Naive thymus-derived CD4-positive, alpha-beta T cell (primary cell): ENCODE measurements at regions of chr7 and their contacts with region 1.

Region 1: GRCh38 chr7:156640257-156640948 is at the start of gene RNF32:
- DNase-seq: peak; percentile 72 to 100 (median 81)
- ATAC-seq: peak; percentile 88
- H3K4me3 ChIP-seq: peak within 1 kb of the TSS; percentile 77
- H3K4me3 Mint-ChIP-seq: peak within 1 kb of the TSS; percentile 78 to 98 (median 87)
- H3K27ac ChIP-seq: peak within 1 kb of the TSS; percentile 67
- H3K27ac Mint-ChIP-seq: peak within 1 kb of the TSS in 8 of 9 donors; percentile 50 to 100 (median 84)
- H3K4me1 ChIP-seq: peaks cover 6% of the 10 kb centered on the region in 2 donors
- H3K4me1 Mint-ChIP-seq: peaks cover 7 to 48% (median 17%) of the 10 kb centered on the region in 7 donors
- H3K27me3 ChIP-seq: no peaks in the 10 kb centered on the region
- H3K27me3 Mint-ChIP-seq: peaks cover 12 to 65% (median 42%) of the 10 kb centered on the region in 5 donors
- total RNA-seq, gene RNF32: 0.81 to 2.1 (median 0.99) TPM in 4 of 5 experiments, not detected in the other

Region 2: DNA sequence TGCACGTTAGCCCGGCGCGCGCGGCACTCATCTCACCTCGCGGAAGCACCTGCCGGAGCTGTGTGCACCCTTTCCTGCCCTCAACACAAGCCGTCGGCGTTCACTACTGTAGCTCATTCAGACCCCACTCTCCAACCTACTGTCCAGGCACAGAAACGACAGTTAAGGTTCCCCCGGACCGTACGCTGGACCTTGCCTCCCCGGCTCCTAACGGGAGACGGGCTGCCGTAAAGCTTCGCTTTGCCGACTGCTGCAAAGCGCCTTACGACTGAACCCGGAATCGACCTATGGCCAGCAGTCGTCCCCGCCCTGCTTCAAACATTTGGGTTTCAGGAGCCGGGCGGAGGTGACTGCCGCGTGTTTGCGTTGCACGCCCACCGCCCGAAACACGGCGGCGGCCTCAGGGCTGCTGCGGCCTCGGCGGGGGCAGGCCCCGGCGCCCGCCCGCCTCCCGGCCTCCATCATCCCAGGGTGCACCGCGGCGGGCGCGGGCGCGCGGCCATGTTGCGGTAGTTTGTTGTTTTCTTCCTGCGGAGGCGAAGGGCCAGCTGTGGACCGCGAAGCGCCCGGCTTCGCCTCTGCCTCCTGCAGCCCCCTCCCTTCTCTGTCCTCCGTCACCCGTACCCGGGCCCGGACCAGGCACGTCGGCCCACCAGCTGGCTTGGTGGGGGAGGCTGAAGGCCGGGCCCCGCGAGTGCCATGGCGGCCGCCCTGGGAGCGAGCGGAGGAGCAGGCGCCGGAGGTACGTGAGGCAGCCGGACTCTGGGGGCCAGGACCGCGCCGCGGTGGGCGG is 996.0 kb before region 1 on chr7 and contains the start of gene RBM33:
- CTCF ChIA-PET with region 1: no interaction called
- POLR2A ChIA-PET with region 1: no interaction called
- intact Hi-C with region 1: loop called (anchors 5 to 10 kb)
- DNase-seq: peak; percentile 74 to 91 (median 84)
- ATAC-seq: peak; percentile 90
- H3K4me3 ChIP-seq: peak within 1 kb of the TSS; percentile 99
- H3K4me3 Mint-ChIP-seq: peak within 1 kb of the TSS; percentile 94 to 100 (median 99)
- H3K27ac ChIP-seq: peak within 1 kb of the TSS; percentile 98
- H3K27ac Mint-ChIP-seq: peak within 1 kb of the TSS; percentile 94 to 100 (median 99)
- H3K4me1 ChIP-seq: peaks cover 22 to 27% of the 10 kb centered on the region in 2 donors
- H3K4me1 Mint-ChIP-seq: peaks cover 30 to 58% (median 49%) of the 10 kb centered on the region in 7 donors
- H3K27me3 ChIP-seq: no peaks in the 10 kb centered on the region
- H3K27me3 Mint-ChIP-seq: peaks cover 0 to 2% (median 0%) of the 10 kb centered on the region in 5 donors
- total RNA-seq, gene RBM33: 90.2 to 177 (median 164) TPM

Region 3: DNA sequence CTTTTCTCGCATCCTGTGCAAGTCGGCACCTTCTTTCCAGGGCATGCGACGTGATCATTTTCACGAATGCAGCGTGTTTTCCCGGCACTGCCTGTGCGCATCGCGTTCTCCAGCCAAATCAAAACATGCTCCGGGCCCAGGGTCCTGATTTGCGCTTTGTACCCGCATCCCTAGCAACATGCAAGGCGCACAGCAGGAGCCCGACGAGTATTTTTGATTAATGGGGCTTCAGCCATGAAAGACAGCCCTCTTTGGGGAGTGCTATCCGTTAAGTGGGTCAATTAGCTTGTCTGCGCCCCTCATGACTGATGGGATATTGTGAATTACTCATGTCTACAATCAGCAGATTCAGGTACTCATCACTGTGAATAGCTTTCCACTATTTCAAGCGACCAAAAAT is 243.2 kb before region 1 on chr7:
- CTCF ChIA-PET with region 1: no interaction called
- POLR2A ChIA-PET with region 1: no interaction called
- intact Hi-C with region 1: no loop called
- DNase-seq: no peak
- ATAC-seq: no peak
- H3K4me3 ChIP-seq: no peak overlapping the region
- H3K4me3 Mint-ChIP-seq: no peak overlapping the region
- H3K27ac ChIP-seq: no peak overlapping the region
- H3K27ac Mint-ChIP-seq: no peak overlapping the region
- H3K4me1 ChIP-seq: no peaks in the 10 kb centered on the region
- H3K4me1 Mint-ChIP-seq: no peaks in the 10 kb centered on the region
- H3K27me3 ChIP-seq: no peaks in the 10 kb centered on the region
- H3K27me3 Mint-ChIP-seq: peaks cover 0 to 19% (median 4%) of the 10 kb centered on the region in 5 donors

Region 4: DNA sequence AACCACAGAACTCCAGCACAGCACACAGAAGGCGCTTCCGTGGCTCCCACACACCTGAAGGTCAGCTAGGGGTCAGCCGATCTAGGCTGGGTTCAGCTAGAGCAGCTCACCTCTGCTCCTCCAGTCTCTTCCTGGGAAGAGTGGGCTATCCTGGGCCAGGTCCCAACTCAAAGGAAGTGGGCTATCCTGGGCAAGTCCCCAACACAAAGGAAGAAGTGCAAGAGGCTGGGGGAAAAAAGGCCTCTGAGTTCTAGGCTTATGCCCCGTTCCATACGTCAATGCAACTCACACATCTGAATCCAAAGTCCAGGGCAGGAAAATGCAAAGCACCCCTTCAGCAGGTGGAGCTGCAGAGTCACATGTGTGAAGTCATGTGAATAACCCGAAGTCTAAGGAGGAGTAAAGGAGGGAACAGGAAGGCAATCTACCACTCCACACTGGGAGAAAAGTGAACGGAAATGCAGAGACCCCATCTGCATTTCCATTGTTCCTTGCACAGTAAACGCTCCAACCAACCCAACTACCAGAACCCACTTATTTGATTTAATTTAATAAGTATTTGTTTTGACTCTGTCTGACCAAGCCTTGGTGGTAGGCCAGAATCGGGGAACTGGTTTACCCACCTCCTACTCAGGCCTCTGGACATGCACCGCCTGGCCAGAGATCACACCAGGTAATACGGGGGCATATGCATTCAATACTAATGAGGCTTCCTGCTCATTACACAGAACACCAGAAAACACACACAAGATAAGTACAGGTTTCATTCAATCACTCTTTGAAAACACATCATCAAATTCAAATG is 95.3 kb before region 1 on chr7:
- CTCF ChIA-PET with region 1: no interaction called
- POLR2A ChIA-PET with region 1: interaction called, 4 read pairs
- intact Hi-C with region 1: loop called in 1 of 2 experiments (anchors 5 kb)
- DNase-seq: no peak
- ATAC-seq: no peak
- H3K4me3 ChIP-seq: no peak overlapping the region
- H3K4me3 Mint-ChIP-seq: no peak overlapping the region
- H3K27ac ChIP-seq: no peak overlapping the region
- H3K27ac Mint-ChIP-seq: no peak overlapping the region
- H3K4me1 ChIP-seq: no peaks in the 10 kb centered on the region
- H3K4me1 Mint-ChIP-seq: no peaks in the 10 kb centered on the region
- H3K27me3 ChIP-seq: no peaks in the 10 kb centered on the region
- H3K27me3 Mint-ChIP-seq: peaks cover 6 to 29% (median 25%) of the 10 kb centered on the region in 5 donors

Region 5: GRCh38 chr7:156625580-156625979 is 14.8 kb before region 1 on chr7:
- CTCF ChIA-PET with region 1: no interaction called
- POLR2A ChIA-PET with region 1: no interaction called
- intact Hi-C with region 1: loop called in 1 of 2 experiments (anchors 1 kb)
- DNase-seq: no peak
- ATAC-seq: no peak
- H3K4me3 ChIP-seq: no peak overlapping the region
- H3K4me3 Mint-ChIP-seq: peak overlapping the region in 1 of 10 donors; percentile 83
- H3K27ac ChIP-seq: no peak overlapping the region
- H3K27ac Mint-ChIP-seq: peak overlapping the region in 1 of 9 donors; percentile 86
- H3K4me1 ChIP-seq: no peaks in the 10 kb centered on the region
- H3K4me1 Mint-ChIP-seq: peaks cover 0 to 31% (median 0%) of the 10 kb centered on the region in 7 donors
- H3K27me3 ChIP-seq: no peaks in the 10 kb centered on the region
- H3K27me3 Mint-ChIP-seq: peaks cover 7 to 33% (median 12%) of the 10 kb centered on the region in 5 donors

Region 6: GRCh38 chr7:156777364-156778069 is 137.1 kb after region 1 on chr7:
- CTCF ChIA-PET with region 1: no interaction called
- POLR2A ChIA-PET with region 1: no interaction called
- intact Hi-C with region 1: loop called in 1 of 2 experiments (anchors 2 kb)
- DNase-seq: peak in 1 of 9 donors; percentile 47
- ATAC-seq: no peak
- H3K4me3 ChIP-seq: no peak overlapping the region
- H3K4me3 Mint-ChIP-seq: peak overlapping the region in 1 of 10 donors; percentile 63
- H3K27ac ChIP-seq: no peak overlapping the region
- H3K27ac Mint-ChIP-seq: peak overlapping the region in 3 of 9 donors; percentile 14 to 91 (median 17)
- H3K4me1 ChIP-seq: no peaks in the 10 kb centered on the region
- H3K4me1 Mint-ChIP-seq: peaks cover 0 to 39% (median 14%) of the 10 kb centered on the region in 7 donors
- H3K27me3 ChIP-seq: no peaks in the 10 kb centered on the region
- H3K27me3 Mint-ChIP-seq: no peaks in the 10 kb centered on the region

Region 7: GRCh38 chr7:157138424-157139110 is 498.2 kb after region 1 on chr7 and contains the start of gene UBE3C:
- CTCF ChIA-PET with region 1: no interaction called
- POLR2A ChIA-PET with region 1: no interaction called
- intact Hi-C with region 1: loop called (anchors 1 to 10 kb)
- DNase-seq: peak; percentile 88 to 96 (median 93)
- ATAC-seq: peak; percentile 91
- H3K4me3 ChIP-seq: peak within 1 kb of the TSS; percentile 82
- H3K4me3 Mint-ChIP-seq: peak within 1 kb of the TSS; percentile 77 to 93 (median 84)
- H3K27ac ChIP-seq: peak within 1 kb of the TSS; percentile 92
- H3K27ac Mint-ChIP-seq: peak within 1 kb of the TSS; percentile 76 to 99 (median 93)
- H3K4me1 ChIP-seq: peaks cover 35 to 43% of the 10 kb centered on the region in 2 donors
- H3K4me1 Mint-ChIP-seq: peaks cover 26 to 45% (median 42%) of the 10 kb centered on the region in 7 donors
- H3K27me3 ChIP-seq: no peaks in the 10 kb centered on the region
- H3K27me3 Mint-ChIP-seq: peaks cover 0 to 2% (median 0%) of the 10 kb centered on the region in 5 donors
- total RNA-seq, gene UBE3C: 41.6 to 64.6 (median 54.9) TPM